GM13976 (cell line): ENCODE measurements at regions of chr14 and their contacts with region 1.

Region 1: GRCh38 chr14:103281496-103282231 is 52.4 kb upstream of the EIF5 start:
- DNase-seq: no peak
- CTCF ChIP-seq: no peak

Region 2: GRCh38 chr14:103078093-103078749 is 203.4 kb before region 1 on chr14:
- in situ Hi-C with region 1: loop called (anchors 5 kb)
- DNase-seq: peak; percentile 87
- CTCF ChIP-seq: peak; percentile 72

Region 3: GRCh38 chr14:103333754-103334643 is 52.3 kb after region 1 on chr14 and contains the start of gene EIF5:
- in situ Hi-C with region 1: no loop called
- DNase-seq: peak; percentile 97
- CTCF ChIP-seq: no peak